Calu3 (cell line): ENCODE measurements at regions of chr14 and their contacts with region 1.

Region 1: GRCh38 chr14:54347997-54348611 is 48.7 kb upstream of the CDKN3 start:
- DNase-seq: peak; percentile 46
- H3K4me3 Mint-ChIP-seq: no peak overlapping the region
- H3K27ac Mint-ChIP-seq: no peak overlapping the region
- H3K4me1 Mint-ChIP-seq: peaks cover 4% of the 10 kb centered on the region
- H3K27me3 Mint-ChIP-seq: no peaks in the 10 kb centered on the region
- CTCF ChIP-seq: peak; percentile 48

Region 2: DNA sequence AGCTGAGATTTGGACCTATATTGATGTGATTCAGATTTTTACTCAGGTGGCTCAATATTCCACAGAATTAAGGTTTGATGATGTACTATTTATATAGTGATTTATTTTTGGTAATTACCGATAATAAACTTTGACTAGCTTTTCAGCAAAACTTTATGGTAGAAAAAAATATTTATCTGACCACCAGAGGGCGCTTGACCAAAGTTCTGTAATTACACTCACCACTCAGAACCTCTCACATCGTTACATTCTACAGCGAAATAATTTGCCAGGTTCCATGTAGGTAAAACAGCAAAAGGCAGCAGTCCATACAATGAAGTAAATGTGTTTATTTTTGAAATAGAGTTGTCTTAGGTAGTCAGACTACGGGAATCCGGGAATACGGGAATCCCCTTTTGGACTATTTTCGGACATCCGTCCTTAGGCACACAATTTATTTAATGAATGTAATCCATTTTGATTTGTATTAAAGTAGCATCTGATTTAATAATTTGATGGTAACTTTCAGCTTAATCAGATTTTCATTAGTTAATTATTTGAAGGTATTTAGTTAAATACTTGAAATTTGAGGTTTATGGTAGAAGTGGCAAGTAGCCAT is 1052.0 kb before region 1 on chr14:
- CTCF ChIA-PET with region 1: interaction called, 13 read pairs
- intact Hi-C with region 1: loop called (anchors 1 kb)
- DNase-seq: peak; percentile 38
- H3K4me3 Mint-ChIP-seq: no peak overlapping the region
- H3K27ac Mint-ChIP-seq: no peak overlapping the region
- H3K4me1 Mint-ChIP-seq: no peaks in the 10 kb centered on the region
- H3K27me3 Mint-ChIP-seq: peaks cover 9% of the 10 kb centered on the region
- CTCF ChIP-seq: peak; percentile 32

Region 3: GRCh38 chr14:53412803-53413675 is 935.1 kb before region 1 on chr14:
- CTCF ChIA-PET with region 1: no interaction called
- intact Hi-C with region 1: loop called (anchors 5 kb)
- DNase-seq: peak; percentile 4
- H3K4me3 Mint-ChIP-seq: no peak overlapping the region
- H3K27ac Mint-ChIP-seq: no peak overlapping the region
- H3K4me1 Mint-ChIP-seq: no peaks in the 10 kb centered on the region
- H3K27me3 Mint-ChIP-seq: peaks cover 7% of the 10 kb centered on the region
- CTCF ChIP-seq: no peak

Region 4: GRCh38 chr14:53432378-53432802 is 915.7 kb before region 1 on chr14:
- CTCF ChIA-PET with region 1: interaction called, 4 read pairs
- intact Hi-C with region 1: loop called (anchors 2 kb)
- DNase-seq: peak; percentile 49
- H3K4me3 Mint-ChIP-seq: no peak overlapping the region
- H3K27ac Mint-ChIP-seq: no peak overlapping the region
- H3K4me1 Mint-ChIP-seq: no peaks in the 10 kb centered on the region
- H3K27me3 Mint-ChIP-seq: peaks cover 16% of the 10 kb centered on the region
- CTCF ChIP-seq: peak; percentile 69

Region 5: GRCh38 chr14:54226103-54226502 is 122.0 kb before region 1 on chr14:
- CTCF ChIA-PET with region 1: no interaction called
- intact Hi-C with region 1: no loop called
- DNase-seq: no peak
- H3K4me3 Mint-ChIP-seq: no peak overlapping the region
- H3K27ac Mint-ChIP-seq: no peak overlapping the region
- H3K4me1 Mint-ChIP-seq: no peaks in the 10 kb centered on the region
- H3K27me3 Mint-ChIP-seq: no peaks in the 10 kb centered on the region
- CTCF ChIP-seq: no peak